ENCODE measurements at regions of chr6 and their contacts with region 1.

Region 1: DNA sequence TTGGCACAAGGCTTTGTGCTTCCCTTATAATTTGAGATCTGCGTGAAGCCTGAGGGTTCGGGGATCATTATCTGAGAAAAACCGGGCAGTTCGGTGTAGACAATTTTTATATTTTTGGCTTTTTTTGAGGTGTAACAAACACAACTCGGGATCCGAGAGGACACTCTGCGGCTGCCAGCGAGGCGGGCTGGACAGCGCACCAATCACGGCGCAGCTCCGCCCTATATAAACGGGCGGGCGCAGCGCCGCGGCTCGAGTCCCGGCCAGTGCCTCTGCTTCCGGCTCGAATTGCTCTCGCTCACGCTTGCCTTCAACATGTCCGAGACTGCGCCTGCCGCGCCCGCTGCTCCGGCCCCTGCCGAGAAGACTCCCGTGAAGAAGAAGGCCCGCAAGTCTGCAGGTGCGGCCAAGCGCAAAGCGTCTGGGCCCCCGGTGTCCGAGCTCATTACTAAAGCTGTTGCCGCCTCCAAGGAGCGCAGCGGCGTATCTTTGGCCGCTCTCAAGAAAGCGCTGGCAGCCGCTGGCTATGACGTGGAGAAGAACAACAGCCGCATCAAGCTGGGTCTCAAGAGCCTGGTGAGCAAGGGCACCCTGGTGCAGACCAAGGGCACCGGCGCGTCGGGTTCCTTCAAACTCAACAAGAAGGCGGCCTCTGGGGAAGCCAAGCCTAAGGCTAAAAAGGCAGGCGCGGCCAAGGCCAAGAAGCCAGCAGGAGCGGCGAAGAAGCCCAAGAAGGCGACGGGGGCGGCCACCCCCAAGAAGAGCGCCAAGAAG is 69.0 kb downstream of the HFE start:
- DNase-seq: peak; percentile 94
- ATAC-seq: peak; percentile 44
- H3K4me3 Mint-ChIP-seq: peak overlapping the region; percentile 100
- H3K27ac Mint-ChIP-seq: peak overlapping the region; percentile 99
- H3K4me1 Mint-ChIP-seq: peaks cover 43% of the 10 kb centered on the region
- H3K27me3 Mint-ChIP-seq: no peaks in the 10 kb centered on the region

Region 2: GRCh38 chr6:26054857-26055669 is 101.2 kb before region 1 on chr6:
- POLR2A ChIA-PET with region 1: interaction called, 163 read pairs
- DNase-seq: peak; percentile 81
- ATAC-seq: peak; percentile 69
- H3K4me3 Mint-ChIP-seq: peak overlapping the region; percentile 96
- H3K27ac Mint-ChIP-seq: peak overlapping the region; percentile 100
- H3K4me1 Mint-ChIP-seq: peaks cover 32% of the 10 kb centered on the region
- H3K27me3 Mint-ChIP-seq: no peaks in the 10 kb centered on the region

Region 3: GRCh38 chr6:26141378-26141904 is 14.8 kb before region 1 on chr6:
- POLR2A ChIA-PET with region 1: interaction called, 2,352 read pairs
- DNase-seq: no peak
- ATAC-seq: no peak
- H3K4me3 Mint-ChIP-seq: no peak overlapping the region
- H3K27ac Mint-ChIP-seq: no peak overlapping the region
- H3K4me1 Mint-ChIP-seq: peaks cover 10% of the 10 kb centered on the region
- H3K27me3 Mint-ChIP-seq: no peaks in the 10 kb centered on the region

Region 4: GRCh38 chr6:26216356-26216885 is 60.2 kb after region 1 on chr6:
- POLR2A ChIA-PET with region 1: interaction called, 165 read pairs
- DNase-seq: peak; percentile 77
- ATAC-seq: peak; percentile 75
- H3K4me3 Mint-ChIP-seq: no peak overlapping the region
- H3K27ac Mint-ChIP-seq: no peak overlapping the region
- H3K4me1 Mint-ChIP-seq: peaks cover 32% of the 10 kb centered on the region
- H3K27me3 Mint-ChIP-seq: no peaks in the 10 kb centered on the region

Region 5: GRCh38 chr6:26285143-26286134 is 129.2 kb after region 1 on chr6:
- POLR2A ChIA-PET with region 1: interaction called, 61 read pairs
- DNase-seq: peak; percentile 87
- ATAC-seq: peak; percentile 79
- H3K4me3 Mint-ChIP-seq: peak overlapping the region; percentile 72
- H3K27ac Mint-ChIP-seq: peak overlapping the region; percentile 92
- H3K4me1 Mint-ChIP-seq: peaks cover 37% of the 10 kb centered on the region
- H3K27me3 Mint-ChIP-seq: peaks cover 3% of the 10 kb centered on the region

Region 6: GRCh38 chr6:26394289-26394688 is 238.0 kb after region 1 on chr6:
- POLR2A ChIA-PET with region 1: no interaction called
- DNase-seq: no peak
- ATAC-seq: no peak
- H3K4me3 Mint-ChIP-seq: no peak overlapping the region
- H3K27ac Mint-ChIP-seq: no peak overlapping the region
- H3K4me1 Mint-ChIP-seq: peaks cover 6% of the 10 kb centered on the region
- H3K27me3 Mint-ChIP-seq: no peaks in the 10 kb centered on the region

Region 7: GRCh38 chr6:27838058-27838944 is 1682.0 kb after region 1 on chr6:
- POLR2A ChIA-PET with region 1: interaction called, 34 read pairs
- DNase-seq: peak; percentile 84
- ATAC-seq: peak; percentile 74
- H3K4me3 Mint-ChIP-seq: no peak overlapping the region
- H3K27ac Mint-ChIP-seq: no peak overlapping the region
- H3K4me1 Mint-ChIP-seq: peaks cover 26% of the 10 kb centered on the region
- H3K27me3 Mint-ChIP-seq: peaks cover 2% of the 10 kb centered on the region